ENCODE measurements at regions of chr11 and their contacts with region 1.

Region 1: GRCh38 chr11:35082321-35083182 is 56.4 kb upstream of the CD44 start:
- DNase-seq: peak; percentile 96
- H3K4me3 Mint-ChIP-seq: peak overlapping the region; percentile 73
- H3K27ac Mint-ChIP-seq: peak overlapping the region; percentile 86
- H3K4me1 Mint-ChIP-seq: peaks cover 78% of the 10 kb centered on the region
- H3K27me3 Mint-ChIP-seq: peaks cover 1% of the 10 kb centered on the region

Region 2: DNA sequence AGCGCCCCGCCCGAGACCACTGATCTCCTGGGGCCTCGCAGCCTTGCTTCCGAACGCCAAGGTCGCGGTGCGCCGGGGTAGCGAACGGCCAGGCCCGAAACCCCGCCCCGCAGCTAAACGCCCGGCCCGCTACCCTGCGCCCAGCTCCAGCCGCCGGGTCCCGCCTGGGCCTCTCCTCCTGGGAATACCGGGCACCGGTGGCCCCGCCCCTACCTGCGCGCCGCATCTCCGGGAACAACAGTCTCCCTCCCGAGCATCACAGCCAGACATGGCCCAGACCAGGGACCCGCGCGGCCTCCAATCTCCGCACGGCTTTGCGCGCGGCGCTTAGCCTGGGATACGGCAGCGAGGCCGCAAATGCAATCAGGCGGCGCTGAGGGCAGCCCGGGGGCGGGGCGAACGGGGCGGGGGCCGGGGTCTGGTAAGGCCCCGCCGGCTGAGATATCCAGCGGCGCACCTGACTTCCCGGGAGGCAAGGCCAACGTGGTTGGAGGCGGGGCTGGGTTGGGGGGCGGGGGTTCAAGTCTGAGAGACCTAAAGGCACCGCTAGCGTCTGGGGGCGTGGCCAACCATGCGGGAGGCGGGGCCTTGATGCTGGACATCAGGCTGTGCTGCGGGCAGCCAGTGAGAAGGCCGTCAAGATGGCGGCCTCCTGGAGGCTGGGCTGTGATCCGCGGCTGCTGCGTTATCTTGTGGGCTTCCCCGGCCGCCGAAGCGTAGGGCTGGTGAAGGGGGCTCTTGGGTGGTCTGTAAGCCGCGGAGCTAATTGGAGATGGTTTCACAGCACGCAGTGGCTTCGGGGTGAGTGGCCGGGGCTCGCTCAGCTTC is 166.3 kb before region 1 on chr11 and contains the starts of genes APIP and PDHX:
- intact Hi-C with region 1: loop called (anchors 2 kb)
- DNase-seq: peak; percentile 98
- H3K4me3 Mint-ChIP-seq: peak within 1 kb of the TSS; percentile 98
- H3K27ac Mint-ChIP-seq: peak within 1 kb of the TSS; percentile 95
- H3K4me1 Mint-ChIP-seq: peaks cover 25% of the 10 kb centered on the region
- H3K27me3 Mint-ChIP-seq: no peaks in the 10 kb centered on the region
- total RNA-seq, gene APIP: 26.8 and 29.6 TPM in 2 replicates
- total RNA-seq, gene PDHX: 31.0 and 35.7 TPM in 2 replicates

Region 3: DNA sequence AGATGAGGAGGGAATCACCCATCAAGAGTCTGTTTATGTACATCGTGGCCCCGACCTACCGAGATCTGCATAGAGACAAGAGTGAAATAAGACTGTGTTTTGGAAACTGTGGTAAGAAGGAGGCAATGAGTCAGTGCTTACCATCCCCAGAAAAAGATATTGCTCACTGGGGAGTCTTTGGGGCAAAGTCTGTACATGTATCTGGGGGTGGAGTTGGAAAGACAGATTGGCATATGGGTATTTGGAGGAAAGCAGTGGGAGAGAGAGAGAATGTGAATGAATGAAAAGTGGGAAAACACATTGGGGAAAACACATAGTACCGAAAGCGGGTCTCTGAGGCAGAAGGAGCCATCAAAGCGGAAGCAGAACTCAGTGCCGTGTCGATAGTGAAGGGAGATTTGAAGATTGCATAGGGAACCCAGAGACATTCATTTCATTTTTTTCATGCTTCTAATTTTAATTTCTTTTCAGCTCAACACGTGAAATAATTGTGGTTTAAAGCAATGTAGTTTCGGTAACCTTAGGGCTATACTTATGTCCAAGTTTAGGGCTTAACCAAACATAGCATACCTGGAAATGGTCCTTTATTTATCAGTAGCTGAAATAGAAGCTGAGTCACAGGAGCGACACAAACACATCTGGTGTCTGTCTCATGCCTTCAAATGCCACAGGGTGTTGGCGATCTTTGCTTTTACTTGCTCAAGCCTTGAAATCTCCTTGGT is 42.2 kb before region 1 on chr11:
- intact Hi-C with region 1: loop called (anchors 1 kb)
- DNase-seq: peak; percentile 91
- H3K4me3 Mint-ChIP-seq: peak overlapping the region; percentile 77
- H3K27ac Mint-ChIP-seq: peak overlapping the region; percentile 94
- H3K4me1 Mint-ChIP-seq: peaks cover 52% of the 10 kb centered on the region
- H3K27me3 Mint-ChIP-seq: peaks cover 9% of the 10 kb centered on the region

Region 4: DNA sequence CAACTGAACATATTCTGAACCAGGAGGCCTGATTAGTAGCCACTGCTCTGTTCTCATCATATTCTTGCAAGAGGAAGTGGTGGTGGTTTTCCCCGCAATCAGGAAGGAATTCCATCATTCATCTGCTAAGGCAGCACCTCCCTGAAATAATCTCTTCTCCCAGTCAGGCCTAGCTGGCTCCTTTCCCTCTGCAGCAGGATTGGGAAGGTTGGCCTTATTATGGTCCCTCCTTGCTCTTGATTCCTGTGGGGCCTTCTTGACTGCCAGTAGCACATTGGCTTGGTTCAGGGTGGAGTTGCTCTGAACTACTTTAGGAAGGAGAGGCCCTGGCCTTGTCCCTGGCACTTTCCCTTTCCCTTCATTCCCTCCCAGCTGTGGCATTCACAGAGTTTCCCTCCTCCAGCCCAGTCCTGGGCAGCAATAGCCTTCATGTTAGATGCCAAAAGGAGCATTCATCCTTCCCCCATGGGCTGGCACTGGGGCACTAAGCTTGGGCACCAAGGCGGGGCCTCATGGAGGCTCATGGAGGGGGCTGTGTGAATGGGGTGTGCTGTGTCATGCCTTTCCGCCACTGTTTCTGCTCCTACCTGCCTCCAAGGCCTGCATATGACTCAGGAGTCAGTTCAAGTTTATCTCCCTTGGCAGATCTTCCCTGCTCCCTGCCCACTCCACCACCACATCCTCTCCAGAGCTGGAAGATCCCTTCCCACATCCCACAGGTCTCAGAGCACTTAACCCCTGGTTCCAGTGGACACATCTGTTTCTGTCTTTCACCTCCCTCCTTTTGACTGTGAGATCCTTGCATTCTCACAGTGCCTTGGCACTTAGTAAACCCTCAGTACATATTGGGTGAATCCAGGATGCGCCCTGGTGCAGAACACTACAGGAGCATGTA is 28.9 kb after region 1 on chr11:
- intact Hi-C with region 1: no loop called
- DNase-seq: no peak
- H3K4me3 Mint-ChIP-seq: peak overlapping the region; percentile 13
- H3K27ac Mint-ChIP-seq: peak overlapping the region; percentile 30
- H3K4me1 Mint-ChIP-seq: peaks cover 35% of the 10 kb centered on the region
- H3K27me3 Mint-ChIP-seq: peaks cover 14% of the 10 kb centered on the region

Region 5: GRCh38 chr11:35126000-35126878 is 43.7 kb after region 1 on chr11:
- intact Hi-C with region 1: loop called (anchors 1 kb)
- DNase-seq: peak; percentile 79
- H3K4me3 Mint-ChIP-seq: peak overlapping the region; percentile 74
- H3K27ac Mint-ChIP-seq: peak overlapping the region; percentile 80
- H3K4me1 Mint-ChIP-seq: peaks cover 50% of the 10 kb centered on the region
- H3K27me3 Mint-ChIP-seq: peaks cover 3% of the 10 kb centered on the region

Region 6: GRCh38 chr11:35165423-35166368 is 83.1 kb after region 1 on chr11:
- intact Hi-C with region 1: loop called (anchors 1 kb)
- DNase-seq: peak; percentile 98
- H3K4me3 Mint-ChIP-seq: peak overlapping the region; percentile 78
- H3K27ac Mint-ChIP-seq: peak overlapping the region; percentile 99
- H3K4me1 Mint-ChIP-seq: peaks cover 93% of the 10 kb centered on the region
- H3K27me3 Mint-ChIP-seq: no peaks in the 10 kb centered on the region

Region 7: GRCh38 chr11:35272391-35272902 is 189.9 kb after region 1 on chr11:
- intact Hi-C with region 1: loop called (anchors 2 kb)
- DNase-seq: peak; percentile 86
- H3K4me3 Mint-ChIP-seq: peak overlapping the region; percentile 16
- H3K27ac Mint-ChIP-seq: peak overlapping the region; percentile 87
- H3K4me1 Mint-ChIP-seq: peaks cover 60% of the 10 kb centered on the region
- H3K27me3 Mint-ChIP-seq: peaks cover 2% of the 10 kb centered on the region

Measured in activated CD4-positive, alpha-beta T cell treated with anti-CD3 and anti-CD28 coated beads, Interleukin-2, amount 10 ng/mL, durations not matched to agents 24 days and 14 days (primary cell).